Naive thymus-derived CD8-positive, alpha-beta T cell (primary cell): ENCODE measurements at regions of chr1 and their contacts with region 1.

Region 1: GRCh38 chr1:229254910-229255541 is 15.9 kb upstream of the RAB4A start:
- DNase-seq: peak in 7 of 10 donors; percentile 8 to 69 (median 49)
- ATAC-seq: peak; percentile 53 to 64
- H3K4me3 Mint-ChIP-seq: peak overlapping the region in 9 of 10 donors; percentile 54 to 81 (median 72)
- H3K27ac Mint-ChIP-seq: peak overlapping the region; percentile 54 to 98 (median 91)
- H3K4me1 Mint-ChIP-seq: peaks cover 37 to 67% (median 59%) of the 10 kb centered on the region in 4 donors
- H3K27me3 Mint-ChIP-seq: no peaks in the 10 kb centered on the region

Region 2: DNA sequence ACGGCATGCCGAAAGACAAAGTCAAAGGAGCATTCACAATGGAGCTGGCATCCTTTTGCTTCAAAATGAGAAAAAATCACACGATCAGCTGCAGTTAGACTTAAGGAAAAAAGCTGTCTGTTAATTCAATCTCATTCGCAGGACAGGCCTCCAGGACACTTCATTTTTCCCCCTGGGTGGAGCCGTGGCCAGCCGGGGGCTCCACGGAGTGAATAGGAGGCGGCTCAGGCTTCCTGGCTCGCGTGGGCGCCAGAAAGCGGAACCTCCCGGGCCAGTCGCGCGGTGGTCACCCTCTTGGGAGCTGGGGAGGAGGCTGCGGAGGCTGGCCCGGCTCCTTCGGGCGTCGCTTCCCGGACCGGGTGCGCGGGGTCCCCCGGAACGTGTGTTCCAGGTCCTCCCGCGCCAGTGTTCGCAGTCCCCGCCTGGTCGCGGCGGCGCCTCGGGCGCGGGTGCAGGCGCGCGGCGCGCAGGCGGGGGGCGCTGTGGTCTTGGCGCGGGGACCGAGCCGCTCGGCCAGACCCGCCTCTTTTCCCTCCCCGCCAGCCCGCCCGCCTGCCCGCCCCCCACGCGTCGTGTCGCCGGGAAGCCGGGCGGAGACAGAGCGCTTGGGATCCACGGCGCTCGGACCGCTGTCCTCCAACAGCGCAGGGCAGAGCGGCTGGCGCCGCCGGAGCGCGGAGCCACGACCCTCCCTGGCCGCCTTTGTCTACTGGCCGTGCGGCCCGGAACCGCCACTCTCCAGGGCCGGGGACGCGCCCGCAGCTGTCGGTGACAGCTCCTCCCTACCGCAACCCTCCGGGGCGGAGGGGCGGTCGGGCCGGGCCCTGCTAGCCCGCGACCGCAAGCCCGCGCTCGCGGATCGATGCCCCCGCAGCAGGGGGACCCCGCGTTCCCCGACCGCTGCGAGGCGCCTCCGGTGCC is 519.9 kb before region 1 on chr1 and contains the start of gene RHOU:
- POLR2A ChIA-PET with region 1: interaction called, 10 read pairs
- DNase-seq: peak; percentile 40 to 77 (median 68)
- ATAC-seq: peak; percentile 85 to 88
- H3K4me3 Mint-ChIP-seq: peak within 1 kb of the TSS; percentile 80 to 91 (median 88)
- H3K27ac Mint-ChIP-seq: peak within 1 kb of the TSS in 8 of 10 donors; percentile 2 to 79 (median 70)
- H3K4me1 Mint-ChIP-seq: peaks cover 0 to 18% (median 13%) of the 10 kb centered on the region in 4 donors
- H3K27me3 Mint-ChIP-seq: peaks cover 4 to 24% (median 16%) of the 10 kb centered on the region in 5 donors
- polyA plus RNA-seq, gene RHOU: 0.14 to 0.44 (median 0.15) TPM

Region 3: DNA sequence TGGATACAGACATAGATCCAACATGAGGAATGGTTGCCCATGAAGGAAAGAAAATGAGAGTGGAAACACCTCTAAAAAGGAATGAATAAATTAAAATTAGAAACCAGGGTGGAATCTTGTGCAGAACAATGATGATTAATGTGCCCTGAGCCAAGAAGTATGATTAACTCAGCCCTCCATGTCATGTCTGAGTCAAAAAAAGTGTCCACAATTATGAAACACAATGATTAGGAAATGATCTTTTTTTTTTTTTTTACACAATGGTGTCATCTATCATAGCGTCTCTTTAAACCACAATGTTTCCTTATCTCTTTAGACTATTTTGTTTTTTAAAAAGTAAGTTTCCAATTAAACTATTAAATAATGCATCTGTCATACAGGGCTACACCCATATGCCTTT is 63.0 kb before region 1 on chr1:
- POLR2A ChIA-PET with region 1: no interaction called
- DNase-seq: no peak
- ATAC-seq: no peak
- H3K4me3 Mint-ChIP-seq: no peak overlapping the region
- H3K27ac Mint-ChIP-seq: no peak overlapping the region
- H3K4me1 Mint-ChIP-seq: peaks cover 0 to 14% (median 3%) of the 10 kb centered on the region in 4 donors
- H3K27me3 Mint-ChIP-seq: no peaks in the 10 kb centered on the region

Region 4: GRCh38 chr1:229341774-229342655 is 87.0 kb after region 1 on chr1:
- POLR2A ChIA-PET with region 1: interaction called, 13 read pairs
- DNase-seq: peak in 9 of 10 donors; percentile 9 to 87 (median 80)
- ATAC-seq: peak; percentile 71 to 72
- H3K4me3 Mint-ChIP-seq: peak overlapping the region; percentile 89 to 96 (median 93)
- H3K27ac Mint-ChIP-seq: peak overlapping the region; percentile 80 to 97 (median 90)
- H3K4me1 Mint-ChIP-seq: peaks cover 23 to 50% (median 40%) of the 10 kb centered on the region in 4 donors
- H3K27me3 Mint-ChIP-seq: peaks cover 0 to 3% (median 0%) of the 10 kb centered on the region in 5 donors

Region 5: DNA sequence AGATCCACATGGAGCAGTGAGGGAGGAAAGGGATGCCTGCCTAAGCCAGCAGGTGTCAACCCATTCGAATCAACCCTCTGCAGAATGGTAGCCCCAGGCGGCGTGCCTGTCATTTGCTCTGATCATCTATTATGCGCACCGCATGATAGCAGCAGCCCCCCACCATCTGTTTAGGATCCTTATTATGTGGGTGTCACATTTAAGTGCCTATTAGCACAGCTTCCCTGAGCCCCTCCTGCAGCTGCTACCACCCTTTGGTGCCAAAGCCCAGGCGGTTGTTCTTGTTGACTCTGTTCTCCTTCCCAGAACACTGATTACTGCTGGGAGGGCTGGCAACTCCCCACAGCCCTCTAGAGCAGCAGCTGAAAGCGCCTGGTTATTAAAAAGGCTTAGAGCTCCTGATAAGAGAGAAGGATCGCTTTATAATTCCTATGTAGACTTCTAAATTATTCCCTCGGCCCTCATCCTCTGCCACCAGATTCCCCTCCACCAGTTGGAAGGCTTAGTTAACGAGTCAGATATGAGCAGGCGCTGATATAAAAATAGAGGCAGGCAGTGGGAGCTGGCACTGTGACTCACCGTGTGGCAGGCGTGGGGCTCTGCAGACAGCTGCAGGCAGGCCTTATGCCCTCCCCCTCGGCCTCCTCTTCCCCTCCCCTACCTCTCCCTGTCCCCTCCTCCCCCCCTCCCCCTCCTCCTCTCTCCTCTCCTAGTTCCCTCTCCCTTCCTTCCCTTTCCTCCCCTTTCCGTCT is 155.8 kb after region 1 on chr1:
- POLR2A ChIA-PET with region 1: no interaction called
- DNase-seq: no peak
- ATAC-seq: peak in 1 of 2 donors; percentile 34
- H3K4me3 Mint-ChIP-seq: peak overlapping the region in 5 of 10 donors; percentile 1 to 62 (median 25)
- H3K27ac Mint-ChIP-seq: peak overlapping the region in 1 of 10 donors; percentile 68
- H3K4me1 Mint-ChIP-seq: peaks cover 11 to 25% (median 22%) of the 10 kb centered on the region in 4 donors
- H3K27me3 Mint-ChIP-seq: peaks cover 28 to 54% (median 47%) of the 10 kb centered on the region in 5 donors

Region 6: DNA sequence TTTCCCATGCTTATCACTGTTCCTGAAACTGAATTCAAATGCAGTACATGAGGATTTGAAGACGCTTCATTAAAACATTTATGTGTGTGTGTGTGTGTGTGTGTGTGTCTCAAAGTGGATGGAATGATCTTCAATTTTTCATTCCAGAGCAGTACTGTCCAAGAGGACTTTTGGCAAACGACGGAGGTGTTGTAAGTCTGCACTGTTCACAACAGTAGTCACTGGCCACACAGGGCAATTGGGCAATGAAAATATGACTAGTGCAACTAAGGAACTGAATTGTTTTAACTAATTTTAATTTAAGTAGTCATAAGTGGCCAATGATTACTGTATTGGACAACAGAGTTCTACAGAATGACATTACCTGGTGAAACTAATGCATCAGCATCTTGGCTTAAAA is 365.9 kb after region 1 on chr1:
- POLR2A ChIA-PET with region 1: no interaction called
- DNase-seq: no peak
- ATAC-seq: no peak
- H3K4me3 Mint-ChIP-seq: no peak overlapping the region
- H3K27ac Mint-ChIP-seq: no peak overlapping the region
- H3K4me1 Mint-ChIP-seq: peaks cover 39 to 65% (median 60%) of the 10 kb centered on the region in 4 donors
- H3K27me3 Mint-ChIP-seq: no peaks in the 10 kb centered on the region